ENCODE measurements at regions of chr10 and their contacts with region 1.

Region 1: GRCh38 chr10:103696411-103697145 is 158.8 kb downstream of the SH3PXD2A start:
- DNase-seq: peak; percentile 71
- H3K4me3 Mint-ChIP-seq: peak overlapping the region; percentile 52
- H3K27ac Mint-ChIP-seq: peak overlapping the region; percentile 91
- H3K4me1 Mint-ChIP-seq: peaks cover 25% of the 10 kb centered on the region
- H3K27me3 Mint-ChIP-seq: peaks cover 3% of the 10 kb centered on the region

Region 2: DNA sequence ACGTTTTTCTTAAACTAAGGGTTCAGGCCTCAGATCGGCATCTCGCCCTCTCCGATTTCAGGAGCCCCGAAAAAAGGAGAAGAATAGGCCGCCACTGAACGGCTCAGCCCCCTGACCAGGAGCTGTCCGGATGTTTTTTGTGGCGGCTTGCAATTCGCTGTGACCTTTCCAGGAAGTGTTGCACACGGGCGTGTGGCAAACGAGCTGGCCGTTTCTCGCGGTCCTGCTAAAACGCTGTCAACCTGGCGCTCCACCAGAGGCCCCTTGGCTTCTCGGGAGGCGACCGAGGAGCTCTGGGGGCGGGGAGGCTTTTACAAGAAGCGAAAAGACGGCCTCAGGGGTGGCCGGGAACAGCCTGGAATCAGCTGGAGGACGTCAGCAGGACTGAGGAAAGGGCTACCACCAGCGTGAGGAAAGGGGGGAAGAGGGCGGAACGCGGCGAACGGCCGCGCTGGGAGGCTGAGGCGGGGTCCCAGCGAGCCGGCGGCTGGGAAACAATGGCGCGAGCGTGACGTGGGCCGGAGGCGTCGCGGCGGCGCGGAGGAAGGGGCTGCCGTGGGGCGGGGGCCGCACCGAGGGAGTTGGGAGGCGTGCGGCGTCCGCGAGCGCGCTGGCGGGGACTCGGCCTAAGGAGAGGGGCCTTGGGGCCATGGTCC is 504.0 kb before region 1 on chr10:
- intact Hi-C with region 1: loop called (anchors 10 kb)
- DNase-seq: peak; percentile 64
- H3K4me3 Mint-ChIP-seq: peak overlapping the region; percentile 96
- H3K27ac Mint-ChIP-seq: peak overlapping the region; percentile 99
- H3K4me1 Mint-ChIP-seq: peaks cover 45% of the 10 kb centered on the region
- H3K27me3 Mint-ChIP-seq: no peaks in the 10 kb centered on the region

Region 3: GRCh38 chr10:103491493-103492381 is 204.8 kb before region 1 on chr10:
- intact Hi-C with region 1: loop called (anchors 5 kb)
- DNase-seq: no peak
- H3K4me3 Mint-ChIP-seq: peak overlapping the region; percentile 51
- H3K27ac Mint-ChIP-seq: peak overlapping the region; percentile 42
- H3K4me1 Mint-ChIP-seq: peaks cover 33% of the 10 kb centered on the region
- H3K27me3 Mint-ChIP-seq: peaks cover 43% of the 10 kb centered on the region

Region 4: DNA sequence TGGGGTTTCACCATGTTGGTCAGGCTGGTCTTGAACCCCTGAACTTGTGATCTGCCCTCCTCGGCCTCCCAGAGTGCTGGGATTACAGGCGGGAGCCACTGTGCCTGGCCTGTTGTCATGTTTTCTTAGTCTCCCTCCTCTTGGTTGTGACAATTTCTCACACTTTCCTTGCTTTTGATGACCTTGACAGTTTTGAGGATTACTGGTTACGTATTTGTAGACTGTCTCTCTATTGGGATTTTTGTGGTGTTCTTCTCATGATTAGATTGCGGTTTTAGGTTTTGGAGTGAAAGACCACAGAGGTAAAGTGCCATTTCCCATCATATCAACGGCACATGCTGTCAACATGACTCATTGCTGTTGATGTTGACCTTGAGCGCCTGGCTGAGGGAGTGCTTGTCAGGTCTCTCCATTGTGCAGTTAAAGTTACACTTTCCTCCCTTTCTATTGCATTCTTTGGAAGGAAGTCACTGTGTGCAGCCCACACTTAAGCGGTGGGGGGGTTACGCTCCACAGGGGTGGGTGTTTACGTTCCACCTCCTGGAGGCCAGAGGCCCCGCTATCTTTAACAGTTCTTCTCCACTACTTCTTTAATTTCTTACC is 192.3 kb before region 1 on chr10:
- intact Hi-C with region 1: loop called (anchors 5 kb)
- DNase-seq: peak; percentile 56
- H3K4me3 Mint-ChIP-seq: peak overlapping the region; percentile 40
- H3K27ac Mint-ChIP-seq: peak overlapping the region; percentile 77
- H3K4me1 Mint-ChIP-seq: peaks cover 53% of the 10 kb centered on the region
- H3K27me3 Mint-ChIP-seq: peaks cover 36% of the 10 kb centered on the region

Region 5: GRCh38 chr10:103659674-103660363 is 36.8 kb before region 1 on chr10:
- intact Hi-C with region 1: loop called (anchors 1 kb)
- DNase-seq: peak; percentile 66
- H3K4me3 Mint-ChIP-seq: peak overlapping the region; percentile 89
- H3K27ac Mint-ChIP-seq: peak overlapping the region; percentile 83
- H3K4me1 Mint-ChIP-seq: peaks cover 8% of the 10 kb centered on the region
- H3K27me3 Mint-ChIP-seq: no peaks in the 10 kb centered on the region

Region 6: GRCh38 chr10:103678178-103678526 is 18.4 kb before region 1 on chr10:
- intact Hi-C with region 1: loop called (anchors 1 kb)
- DNase-seq: peak; percentile 86
- H3K4me3 Mint-ChIP-seq: peak overlapping the region; percentile 81
- H3K27ac Mint-ChIP-seq: peak overlapping the region; percentile 82
- H3K4me1 Mint-ChIP-seq: peaks cover 21% of the 10 kb centered on the region
- H3K27me3 Mint-ChIP-seq: no peaks in the 10 kb centered on the region

Region 7: GRCh38 chr10:103800789-103801540 is 104.4 kb after region 1 on chr10:
- intact Hi-C with region 1: loop called (anchors 5 kb)
- DNase-seq: peak; percentile 64
- H3K4me3 Mint-ChIP-seq: peak overlapping the region; percentile 65
- H3K27ac Mint-ChIP-seq: peak overlapping the region; percentile 80
- H3K4me1 Mint-ChIP-seq: peaks cover 31% of the 10 kb centered on the region
- H3K27me3 Mint-ChIP-seq: peaks cover 3% of the 10 kb centered on the region